ENCODE measurements at regions of chr11 and their contacts with region 1.

Region 1: DNA sequence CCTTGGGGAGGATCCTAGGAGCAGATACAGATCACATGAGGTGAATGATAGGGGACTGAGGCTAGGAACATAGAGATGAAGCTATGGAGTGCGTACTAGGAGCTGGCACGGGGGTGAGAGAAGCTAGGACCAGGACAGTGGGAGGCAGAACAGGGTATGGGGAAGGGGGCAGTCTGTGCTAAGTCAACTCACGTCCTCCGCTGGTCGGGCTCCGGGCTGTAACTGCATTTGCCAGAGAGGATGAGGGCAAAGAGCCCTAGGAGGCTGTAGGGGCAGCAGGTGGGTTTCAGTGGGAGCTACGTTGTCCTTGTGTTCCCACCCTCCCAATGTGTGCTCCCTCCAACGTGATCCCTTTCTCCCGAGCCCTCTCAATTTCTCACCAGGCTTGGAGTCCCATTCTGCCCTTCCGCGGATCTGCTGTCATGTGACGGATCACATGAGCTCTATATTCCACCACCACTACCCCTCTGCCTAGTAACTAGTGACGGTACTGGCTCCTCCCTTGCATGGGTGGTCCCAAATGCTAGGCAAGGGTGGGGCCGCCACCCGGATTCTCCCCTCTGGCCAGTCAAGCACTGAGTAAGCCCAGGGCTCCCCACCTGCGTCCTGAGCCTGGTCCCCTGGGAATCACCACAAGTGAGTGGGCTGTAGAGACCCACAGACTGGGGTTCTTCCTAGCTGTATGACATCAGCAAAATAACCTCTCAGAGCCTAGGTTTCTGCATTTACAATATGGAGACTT is at the start of gene TPP1:
- DNase-seq: peak; percentile 77
- H3K4me3 ChIP-seq: peak within 1 kb of the TSS; percentile 77
- H3K27me3 ChIP-seq: no peaks in the 10 kb centered on the region
- CTCF ChIP-seq: no peak
- polyA plus RNA-seq, gene TPP1: 69.7 and 77.6 TPM in 2 replicates

Region 2: DNA sequence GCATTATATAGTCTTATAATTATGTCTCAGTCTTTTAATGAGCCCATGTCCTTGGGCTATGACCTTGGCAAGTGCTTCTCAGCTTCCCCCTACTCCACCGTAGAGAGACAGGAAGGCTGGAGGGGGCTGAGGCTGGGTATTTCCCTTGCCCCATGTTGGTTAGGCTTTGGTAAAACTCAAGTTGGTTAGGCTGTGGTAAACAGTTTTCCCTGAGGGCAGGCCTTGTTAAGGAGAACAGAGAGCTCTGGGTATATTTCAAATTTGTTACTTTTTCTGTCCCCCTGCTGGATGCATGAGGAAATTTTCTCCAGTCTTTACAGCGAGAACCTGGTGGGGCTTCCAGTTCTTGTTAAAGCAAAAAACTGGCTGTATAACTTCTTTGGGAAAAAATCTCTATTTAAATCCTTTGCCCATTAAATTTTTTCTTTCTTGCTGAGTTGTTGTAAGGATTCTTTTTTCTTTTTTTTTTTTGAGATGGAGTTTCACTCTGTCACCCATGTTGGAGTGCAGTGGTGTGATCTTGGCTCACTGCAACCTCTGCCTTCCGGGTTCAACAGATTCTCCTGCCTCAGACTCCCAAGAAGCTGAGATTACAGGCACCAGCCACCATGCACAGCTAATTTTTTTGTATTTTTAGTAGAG is 48.7 kb after region 1 on chr11:
- CTCF ChIA-PET with region 1: interaction called, 14 read pairs
- POLR2A ChIA-PET with region 1: no interaction called
- DNase-seq: no peak
- H3K4me3 ChIP-seq: no peak overlapping the region
- H3K27me3 ChIP-seq: no peaks in the 10 kb centered on the region
- CTCF ChIP-seq: peak; percentile 57

Measured in BJ (cell line).